Esophagus muscularis mucosa (tissue), 4 donors: ENCODE measurements at regions of chr17 and their contacts with region 1.

Region 1: DNA sequence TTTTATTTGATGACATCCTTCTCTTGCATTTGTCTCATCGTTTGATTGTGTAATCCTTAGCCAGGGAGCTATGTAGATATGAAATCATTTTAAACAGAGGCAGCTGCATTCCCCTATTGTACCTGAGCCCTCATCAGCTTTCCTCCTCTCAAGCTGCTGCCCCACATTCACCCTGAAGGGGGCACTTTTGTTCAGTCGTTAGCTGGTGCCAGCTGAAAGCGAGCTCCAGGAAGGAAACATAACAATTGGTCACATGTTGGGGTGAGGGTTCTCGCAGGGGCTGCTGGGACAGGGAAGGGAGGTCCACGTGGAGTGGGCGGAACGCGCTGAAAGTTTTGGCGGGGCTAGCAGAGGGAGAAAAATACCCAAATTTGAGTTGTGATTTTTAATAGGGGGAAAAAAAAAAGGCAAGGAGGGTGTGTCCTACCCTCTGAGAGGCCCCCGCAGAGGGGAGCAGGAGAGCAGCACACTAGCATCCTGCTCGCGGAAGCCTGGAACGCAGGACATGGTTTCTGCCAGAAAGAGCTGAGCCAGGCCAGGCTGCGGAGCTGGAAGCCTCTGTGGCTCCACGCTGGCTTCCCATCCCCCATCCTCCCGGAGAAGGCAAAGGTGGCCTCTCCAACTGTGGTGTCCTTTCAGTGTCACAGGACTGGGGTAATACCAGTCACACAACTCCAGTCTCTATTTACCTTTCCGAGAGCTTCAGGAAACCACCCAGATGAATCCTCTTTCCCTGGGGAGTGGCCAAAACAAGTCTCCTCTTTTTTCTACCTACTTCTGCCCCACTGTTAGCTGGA is 8.5 kb upstream of the MSL1 start:
- DNase-seq: peak; percentile 98
- H3K4me3 ChIP-seq: peak overlapping the region; percentile 51 to 63 (median 53)
- H3K27ac ChIP-seq: peak overlapping the region; percentile 88 to 99 (median 94)
- H3K4me1 ChIP-seq: peaks cover 55 to 67% (median 65%) of the 10 kb centered on the region in 4 donors
- H3K27me3 ChIP-seq: no peaks in the 10 kb centered on the region
- CTCF ChIP-seq: peak in 2 of 3 experiments; percentile 85 to 98
- EP300 ChIP-seq: no peak
- POLR2A ChIP-seq: no peak

Region 2: GRCh38 chr17:40068917-40069750 is 44.2 kb before region 1 on chr17:
- intact Hi-C with region 1: loop called (anchors 5 kb)
- DNase-seq: peak; percentile 96
- H3K4me3 ChIP-seq: peak overlapping the region; percentile 39 to 50 (median 46)
- H3K27ac ChIP-seq: peak overlapping the region; percentile 91 to 99 (median 99)
- H3K4me1 ChIP-seq: peaks cover 92 to 100% (median 100%) of the 10 kb centered on the region in 4 donors
- H3K27me3 ChIP-seq: no peaks in the 10 kb centered on the region
- CTCF ChIP-seq: peak in 1 of 3 experiments; percentile 4
- EP300 ChIP-seq: no peak
- POLR2A ChIP-seq: no peak

Region 3: GRCh38 chr17:40139566-40140058 is 26.3 kb after region 1 on chr17:
- intact Hi-C with region 1: loop called (anchors 2 kb)
- DNase-seq: no peak
- H3K4me3 ChIP-seq: peak overlapping the region; percentile 74 to 94 (median 88)
- H3K27ac ChIP-seq: peak overlapping the region; percentile 97 to 99 (median 98)
- H3K4me1 ChIP-seq: peaks cover 23 to 47% (median 43%) of the 10 kb centered on the region in 4 donors
- H3K27me3 ChIP-seq: no peaks in the 10 kb centered on the region
- CTCF ChIP-seq: no peak
- EP300 ChIP-seq: no peak
- POLR2A ChIP-seq: no peak

Region 4: DNA sequence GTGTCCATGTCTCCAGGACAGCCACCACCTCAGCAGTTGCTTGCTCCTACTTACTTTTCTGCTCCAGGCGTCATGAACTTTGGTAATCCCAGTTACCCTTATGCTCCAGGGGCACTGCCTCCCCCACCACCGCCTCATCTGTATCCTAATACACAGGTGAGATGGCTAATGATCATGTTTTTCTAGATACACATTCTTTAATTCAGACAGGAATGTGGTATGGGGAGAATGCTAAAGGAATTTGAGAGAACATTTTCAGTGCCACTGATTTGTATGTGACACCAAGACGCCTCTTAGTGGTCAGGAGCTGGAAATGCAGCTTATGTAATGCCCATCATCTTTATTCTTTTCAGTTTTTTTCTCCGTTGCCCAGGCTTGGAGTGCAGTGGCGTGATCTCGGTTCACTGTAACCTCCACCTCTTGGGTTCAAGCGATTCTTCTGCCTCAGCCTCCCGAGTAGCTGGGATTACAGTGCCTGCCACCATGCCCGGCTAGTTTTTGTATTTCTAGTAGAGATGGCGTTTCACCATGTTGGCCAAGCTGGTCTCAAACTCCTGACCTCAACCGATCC is 55.0 kb after region 1 on chr17:
- intact Hi-C with region 1: loop called (anchors 2 kb)
- DNase-seq: no peak
- H3K4me3 ChIP-seq: no peak overlapping the region
- H3K27ac ChIP-seq: peak overlapping the region; percentile 68 to 72 (median 70)
- H3K4me1 ChIP-seq: peaks cover 0 to 18% (median 14%) of the 10 kb centered on the region in 4 donors
- H3K27me3 ChIP-seq: no peaks in the 10 kb centered on the region
- CTCF ChIP-seq: peak; percentile 83 to 95 (median 85)
- EP300 ChIP-seq: no peak
- POLR2A ChIP-seq: no peak